Caco-2 (cell line): ENCODE measurements at regions of chr13 and their contacts with region 1.

Region 1: DNA sequence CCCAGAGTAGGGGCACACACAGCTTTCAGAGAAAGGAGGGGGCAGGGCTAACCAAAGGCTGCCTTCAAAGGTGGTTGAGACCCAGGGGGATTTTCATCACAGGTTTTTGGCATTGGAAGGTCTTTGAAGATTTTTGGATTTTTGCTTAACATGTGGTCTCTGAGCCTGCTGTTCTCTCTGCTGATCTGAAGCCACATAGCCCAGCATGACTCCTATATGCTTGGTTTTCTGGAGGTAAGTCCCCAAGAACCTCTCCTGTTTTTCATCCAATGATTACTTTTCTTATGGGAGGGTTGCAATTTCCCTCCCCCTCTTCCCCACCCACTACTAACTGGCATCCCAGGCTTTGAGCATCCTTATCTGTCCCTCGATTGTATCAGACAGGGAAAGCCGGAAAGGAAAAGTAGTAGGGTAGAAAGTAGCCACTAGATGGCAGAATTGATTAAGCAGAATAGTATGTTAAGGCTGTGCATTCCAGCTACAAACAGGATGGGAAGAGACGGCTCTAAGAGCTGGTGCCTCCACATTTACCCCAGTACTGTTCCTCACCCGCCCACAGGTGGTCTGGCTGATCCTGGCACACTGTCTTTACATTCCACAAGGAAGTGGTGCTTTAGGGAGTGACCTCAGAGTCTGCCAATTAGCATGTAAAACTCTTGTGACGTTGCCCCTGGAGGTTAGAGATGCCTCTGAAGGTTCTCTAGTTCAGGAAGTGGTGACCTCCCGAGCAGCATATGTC is 218.9 kb upstream of the EDNRB start:
- DNase-seq: peak; percentile 60 to 76
- H3K4me3 ChIP-seq: no peak overlapping the region
- H3K4me3 Mint-ChIP-seq: no peak overlapping the region
- H3K27ac Mint-ChIP-seq: peak overlapping the region; percentile 40
- H3K4me1 ChIP-seq: peaks cover 23% of the 10 kb centered on the region
- H3K4me1 Mint-ChIP-seq: peaks cover 18% of the 10 kb centered on the region
- H3K27me3 ChIP-seq: no peaks in the 10 kb centered on the region
- H3K27me3 Mint-ChIP-seq: no peaks in the 10 kb centered on the region
- CTCF ChIP-seq: peak; percentile 69 to 78

Region 2: DNA sequence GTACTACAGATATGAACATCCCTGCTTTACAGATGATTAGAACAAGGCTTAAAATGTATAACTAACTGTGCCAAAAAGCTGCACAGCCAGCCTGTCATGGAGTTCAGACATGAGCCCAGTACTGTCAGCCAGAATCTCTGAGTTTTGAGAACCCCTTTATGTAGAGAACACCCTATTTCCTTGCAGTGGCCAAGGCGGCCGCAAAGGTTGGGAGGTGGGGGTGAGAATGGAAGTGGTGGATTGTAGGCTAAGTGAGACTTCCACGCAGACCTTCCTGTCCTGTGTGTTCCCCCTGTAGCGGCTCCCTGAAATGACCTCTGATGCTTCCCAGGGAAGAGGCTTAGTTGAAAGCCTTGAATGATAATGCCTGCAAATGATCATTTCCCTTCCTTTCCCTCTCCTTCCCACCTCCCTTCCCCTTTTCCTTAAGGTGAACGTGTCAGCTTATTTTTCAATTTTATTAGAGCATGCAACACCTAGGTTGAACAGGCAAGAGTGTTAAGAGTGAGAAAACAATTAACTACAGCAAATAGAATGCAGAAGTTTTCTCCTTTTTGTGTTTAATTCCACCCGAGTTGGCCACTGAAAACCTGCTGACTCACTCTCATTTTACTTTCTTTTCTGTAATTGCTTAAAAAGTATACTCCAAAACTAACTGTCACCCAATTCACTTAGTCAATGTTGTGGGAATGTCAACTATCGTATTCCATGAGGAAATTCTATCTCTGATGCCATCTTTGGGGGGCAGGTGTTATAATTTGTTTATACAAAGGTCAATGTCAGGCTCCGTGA is 51.9 kb before region 1 on chr13:
- CTCF ChIA-PET with region 1: no interaction called
- POLR2A ChIA-PET with region 1: no interaction called
- intact Hi-C with region 1: no loop called
- DNase-seq: no peak
- H3K4me3 ChIP-seq: no peak overlapping the region
- H3K4me3 Mint-ChIP-seq: no peak overlapping the region
- H3K27ac Mint-ChIP-seq: no peak overlapping the region
- H3K4me1 ChIP-seq: no peaks in the 10 kb centered on the region
- H3K4me1 Mint-ChIP-seq: no peaks in the 10 kb centered on the region
- H3K27me3 ChIP-seq: no peaks in the 10 kb centered on the region
- H3K27me3 Mint-ChIP-seq: no peaks in the 10 kb centered on the region
- CTCF ChIP-seq: no peak

Region 3: DNA sequence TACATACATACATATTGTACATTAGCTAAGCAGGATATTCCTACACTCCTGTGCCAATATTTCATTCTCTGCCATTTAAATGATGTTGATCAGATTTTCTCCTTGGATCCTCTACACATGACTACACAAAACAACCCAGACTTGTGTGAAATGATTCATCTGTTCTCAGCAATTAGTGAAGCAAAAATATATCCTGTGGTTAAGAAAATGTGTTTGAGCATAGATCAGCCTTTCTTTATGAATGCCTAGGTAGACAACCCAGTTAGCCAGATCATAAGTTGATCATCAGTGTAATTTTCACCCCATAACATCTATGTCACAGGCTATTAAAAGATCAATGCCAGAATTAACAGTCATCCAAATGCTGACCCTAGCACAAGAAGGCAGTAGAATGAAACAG is 56.3 kb after region 1 on chr13:
- CTCF ChIA-PET with region 1: no interaction called
- POLR2A ChIA-PET with region 1: no interaction called
- intact Hi-C with region 1: loop called (anchors 2 kb)
- DNase-seq: no peak
- H3K4me3 ChIP-seq: no peak overlapping the region
- H3K4me3 Mint-ChIP-seq: no peak overlapping the region
- H3K27ac Mint-ChIP-seq: no peak overlapping the region
- H3K4me1 ChIP-seq: peaks cover 17% of the 10 kb centered on the region
- H3K4me1 Mint-ChIP-seq: peaks cover 12% of the 10 kb centered on the region
- H3K27me3 ChIP-seq: no peaks in the 10 kb centered on the region
- H3K27me3 Mint-ChIP-seq: no peaks in the 10 kb centered on the region
- CTCF ChIP-seq: no peak

Region 4: DNA sequence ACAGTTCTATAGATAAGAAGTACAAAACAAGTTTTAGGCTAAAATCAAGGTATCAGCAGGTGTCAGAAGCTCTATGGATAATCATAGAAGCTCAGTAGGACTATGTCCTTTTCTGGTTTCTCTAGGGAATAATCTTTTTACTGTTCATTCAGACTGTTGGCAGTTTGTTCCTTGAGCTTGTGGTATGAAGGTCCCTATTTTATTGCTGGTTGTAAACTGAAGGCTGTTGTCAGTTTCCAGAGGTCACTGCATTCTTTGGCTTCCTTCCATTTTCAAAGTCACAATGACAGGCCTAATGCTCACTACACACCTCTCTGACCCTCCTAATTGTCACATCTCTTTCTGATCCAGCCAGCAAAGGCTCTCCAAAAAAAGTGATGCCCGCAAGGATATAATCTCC is 118.9 kb after region 1 on chr13:
- CTCF ChIA-PET with region 1: no interaction called
- POLR2A ChIA-PET with region 1: no interaction called
- intact Hi-C with region 1: loop called (anchors 1 kb)
- DNase-seq: peak in 1 of 2 experiments; percentile 28
- H3K4me3 ChIP-seq: no peak overlapping the region
- H3K4me3 Mint-ChIP-seq: no peak overlapping the region
- H3K27ac Mint-ChIP-seq: no peak overlapping the region
- H3K4me1 ChIP-seq: no peaks in the 10 kb centered on the region
- H3K4me1 Mint-ChIP-seq: peaks cover 8% of the 10 kb centered on the region
- H3K27me3 ChIP-seq: no peaks in the 10 kb centered on the region; the same call in none of the 2 replicates
- H3K27me3 Mint-ChIP-seq: no peaks in the 10 kb centered on the region
- CTCF ChIP-seq: no peak

Region 5: GRCh38 chr13:78430166-78430791 is 292.7 kb after region 1 on chr13:
- CTCF ChIA-PET with region 1: interaction called, 3 read pairs
- POLR2A ChIA-PET with region 1: no interaction called
- intact Hi-C with region 1: loop called (anchors 10 kb)
- DNase-seq: no peak
- H3K4me3 ChIP-seq: no peak overlapping the region
- H3K4me3 Mint-ChIP-seq: no peak overlapping the region
- H3K27ac Mint-ChIP-seq: peak overlapping the region; percentile 66
- H3K4me1 ChIP-seq: peaks cover 33% of the 10 kb centered on the region
- H3K4me1 Mint-ChIP-seq: no peaks in the 10 kb centered on the region
- H3K27me3 ChIP-seq: no peaks in the 10 kb centered on the region
- H3K27me3 Mint-ChIP-seq: no peaks in the 10 kb centered on the region
- CTCF ChIP-seq: no peak

Region 6: GRCh38 chr13:78603240-78603957 is 465.8 kb after region 1 on chr13 and contains the start of gene POU4F1:
- CTCF ChIA-PET with region 1: interaction called, 3 read pairs
- POLR2A ChIA-PET with region 1: no interaction called
- intact Hi-C with region 1: loop called (anchors 2 kb)
- DNase-seq: peak; percentile 91 to 96
- H3K4me3 ChIP-seq: peak within 1 kb of the TSS; percentile 78
- H3K4me3 Mint-ChIP-seq: peak within 1 kb of the TSS; percentile 78
- H3K27ac Mint-ChIP-seq: peak within 1 kb of the TSS; percentile 35
- H3K4me1 ChIP-seq: peaks cover 7% of the 10 kb centered on the region; the same call in 1 of the 2 replicates
- H3K4me1 Mint-ChIP-seq: no peaks in the 10 kb centered on the region
- H3K27me3 ChIP-seq: no peaks in the 10 kb centered on the region
- H3K27me3 Mint-ChIP-seq: peaks cover 3% of the 10 kb centered on the region
- CTCF ChIP-seq: no peak
- total RNA-seq, gene POU4F1: 7.3 and 8.1 TPM in 2 replicates

Region 7: DNA sequence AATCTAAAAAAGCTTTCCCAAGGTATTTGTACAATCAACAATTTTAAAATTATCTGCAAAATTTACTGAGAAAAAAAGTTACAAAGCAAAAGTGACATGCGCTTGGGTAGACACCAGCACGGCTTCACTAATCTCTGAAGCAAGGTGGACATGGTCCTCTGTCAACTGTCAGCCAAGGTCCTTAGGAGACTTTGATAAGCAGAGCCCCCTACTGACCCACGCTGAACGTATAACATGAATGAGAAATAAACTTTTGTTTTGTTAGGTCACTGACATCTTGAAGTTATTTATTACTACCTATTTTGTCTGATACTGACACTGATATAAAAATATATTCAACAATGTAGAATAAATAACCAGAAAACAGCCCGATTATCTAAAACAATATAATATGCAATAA is 622.1 kb after region 1 on chr13:
- CTCF ChIA-PET with region 1: no interaction called
- POLR2A ChIA-PET with region 1: no interaction called
- intact Hi-C with region 1: loop called (anchors 10 kb)
- DNase-seq: no peak
- H3K4me3 ChIP-seq: no peak overlapping the region
- H3K4me3 Mint-ChIP-seq: no peak overlapping the region
- H3K27ac Mint-ChIP-seq: no peak overlapping the region
- H3K4me1 ChIP-seq: no peaks in the 10 kb centered on the region
- H3K4me1 Mint-ChIP-seq: no peaks in the 10 kb centered on the region
- H3K27me3 ChIP-seq: no peaks in the 10 kb centered on the region; the same call in 1 of the 2 replicates
- H3K27me3 Mint-ChIP-seq: peaks cover 19% of the 10 kb centered on the region
- CTCF ChIP-seq: no peak

Region 8: DNA sequence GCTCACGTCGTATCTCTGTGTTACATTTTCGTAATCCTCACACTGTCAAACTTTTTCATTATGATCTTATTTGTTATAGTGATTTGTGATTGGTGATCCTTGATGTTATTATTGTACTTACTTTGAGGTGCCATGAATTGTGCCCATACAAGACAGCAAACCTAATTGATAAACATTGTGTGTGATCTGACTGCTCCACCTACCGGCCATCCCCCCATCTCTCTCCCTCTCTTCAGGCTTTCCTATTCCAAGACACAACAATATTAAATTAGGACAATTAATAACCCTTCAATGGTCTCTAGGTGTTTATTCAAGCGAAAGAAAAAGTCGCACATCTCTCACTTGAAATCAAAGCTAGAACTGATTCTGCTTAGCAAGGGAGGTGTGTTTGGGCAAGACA is 919.1 kb after region 1 on chr13:
- CTCF ChIA-PET with region 1: no interaction called
- POLR2A ChIA-PET with region 1: no interaction called
- intact Hi-C with region 1: loop called (anchors 1 kb)
- DNase-seq: no peak
- H3K4me3 ChIP-seq: no peak overlapping the region
- H3K4me3 Mint-ChIP-seq: no peak overlapping the region
- H3K27ac Mint-ChIP-seq: no peak overlapping the region
- H3K4me1 ChIP-seq: no peaks in the 10 kb centered on the region
- H3K4me1 Mint-ChIP-seq: no peaks in the 10 kb centered on the region
- H3K27me3 ChIP-seq: no peaks in the 10 kb centered on the region
- H3K27me3 Mint-ChIP-seq: peaks cover 9% of the 10 kb centered on the region
- CTCF ChIP-seq: peak; percentile 37 to 46